Calu3 (cell line): ENCODE measurements at regions of chr14 and their contacts with region 1.

Region 1: DNA sequence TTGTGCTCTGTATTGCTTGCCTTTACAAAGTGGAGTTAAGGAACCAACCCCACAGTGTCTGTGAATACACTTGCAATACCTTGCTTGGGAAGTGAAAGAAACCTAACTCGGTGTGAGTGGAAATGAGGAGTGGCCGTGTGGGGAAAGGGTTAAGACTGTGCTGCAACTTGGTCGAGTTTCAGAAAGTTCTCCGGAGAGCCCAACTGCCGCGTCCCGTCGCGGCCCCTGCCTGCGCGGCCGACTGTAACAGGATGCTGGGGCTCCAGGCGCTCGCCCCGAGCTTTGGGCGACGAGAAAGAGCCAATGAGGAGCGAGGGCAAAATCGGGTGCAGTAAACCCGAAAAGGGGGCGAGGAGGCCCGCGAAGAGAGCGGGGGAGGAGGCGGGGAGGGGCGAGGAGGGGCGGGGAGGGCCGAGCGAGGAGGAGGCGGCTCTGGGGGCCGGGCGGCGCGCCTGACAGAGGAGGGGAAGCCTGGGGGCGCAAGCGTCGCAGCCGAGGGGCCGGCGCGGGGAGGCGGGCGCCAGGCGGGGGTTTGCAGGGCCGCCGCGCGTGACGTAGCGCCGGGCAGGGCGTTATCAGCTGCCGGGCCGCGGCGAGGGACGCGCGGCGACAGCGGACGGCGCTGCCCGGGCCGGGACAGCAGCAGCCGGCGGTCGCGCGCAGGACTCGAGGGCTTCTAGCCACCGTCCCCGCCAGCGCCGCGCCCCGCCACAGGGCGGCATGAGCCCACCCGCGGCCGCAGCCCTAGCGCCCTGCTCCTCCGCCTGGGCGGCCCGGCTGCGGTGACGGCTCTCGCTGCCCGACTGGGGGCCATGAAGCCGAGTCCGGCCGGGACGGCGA is at the start of gene DACT1:
- DNase-seq: peak; percentile 30
- H3K4me3 Mint-ChIP-seq: peak within 1 kb of the TSS; percentile 75
- H3K27ac Mint-ChIP-seq: no peak within 1 kb of the TSS
- H3K4me1 Mint-ChIP-seq: no peaks in the 10 kb centered on the region
- H3K27me3 Mint-ChIP-seq: peaks cover 65% of the 10 kb centered on the region
- CTCF ChIP-seq: no peak
- total RNA-seq, gene DACT1: not detected in 2 replicates

Region 2: DNA sequence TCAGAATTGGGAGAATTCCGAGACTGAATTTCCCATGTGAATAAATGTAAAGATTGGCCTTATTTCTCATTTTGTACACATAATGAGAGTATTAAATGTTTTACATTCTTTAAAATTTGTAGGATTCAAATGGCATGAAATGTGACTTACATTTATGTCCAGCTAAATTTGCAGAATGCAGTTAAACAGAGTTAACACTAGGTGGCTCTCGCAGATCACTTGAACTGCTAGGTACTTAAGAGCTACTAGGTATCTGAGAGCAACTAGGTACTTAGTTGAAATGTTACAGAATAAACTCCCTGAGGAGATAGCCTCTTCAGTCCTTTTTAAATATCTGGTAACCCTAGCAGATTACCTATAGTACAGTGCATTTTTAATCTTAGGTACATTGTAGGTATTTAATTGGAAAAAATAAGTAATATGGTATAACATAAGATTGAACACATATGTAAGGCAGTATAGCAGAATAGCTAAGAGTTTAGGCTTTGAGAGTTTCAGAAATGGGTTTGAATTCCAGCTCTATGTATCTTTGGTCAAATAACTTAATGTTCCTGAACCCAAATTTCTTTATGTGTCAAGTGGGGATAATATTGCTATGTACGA is 136.3 kb before region 1 on chr14:
- CTCF ChIA-PET with region 1: interaction called, 4 read pairs
- intact Hi-C with region 1: loop called (anchors 5 kb)
- DNase-seq: peak; percentile 16
- H3K4me3 Mint-ChIP-seq: no peak overlapping the region
- H3K27ac Mint-ChIP-seq: no peak overlapping the region
- H3K4me1 Mint-ChIP-seq: no peaks in the 10 kb centered on the region
- H3K27me3 Mint-ChIP-seq: no peaks in the 10 kb centered on the region
- CTCF ChIP-seq: peak; percentile 62

Region 3: DNA sequence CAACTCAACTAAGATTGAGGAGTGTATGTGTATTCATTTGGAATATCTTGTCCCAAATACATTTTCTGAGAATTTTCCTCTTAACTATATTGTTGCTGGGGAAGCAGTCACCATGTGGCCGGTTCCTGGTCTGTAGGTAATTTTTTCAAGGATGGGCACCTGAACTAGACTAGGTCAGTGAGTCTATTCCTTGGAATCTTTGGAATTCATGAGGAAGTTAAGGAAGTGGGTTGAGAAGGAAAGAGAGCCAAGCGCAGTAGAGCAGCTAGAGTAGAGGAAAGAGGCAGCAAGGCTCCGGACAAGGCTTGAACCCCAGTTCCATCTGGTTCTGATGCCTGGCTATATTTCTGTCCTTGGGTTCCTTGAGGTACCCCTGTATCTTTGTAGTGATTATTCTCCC is 183.8 kb after region 1 on chr14:
- CTCF ChIA-PET with region 1: interaction called, 6 read pairs
- intact Hi-C with region 1: loop called (anchors 2 kb)
- DNase-seq: no peak
- H3K4me3 Mint-ChIP-seq: no peak overlapping the region
- H3K27ac Mint-ChIP-seq: no peak overlapping the region
- H3K4me1 Mint-ChIP-seq: no peaks in the 10 kb centered on the region
- H3K27me3 Mint-ChIP-seq: no peaks in the 10 kb centered on the region
- CTCF ChIP-seq: no peak

Region 4: DNA sequence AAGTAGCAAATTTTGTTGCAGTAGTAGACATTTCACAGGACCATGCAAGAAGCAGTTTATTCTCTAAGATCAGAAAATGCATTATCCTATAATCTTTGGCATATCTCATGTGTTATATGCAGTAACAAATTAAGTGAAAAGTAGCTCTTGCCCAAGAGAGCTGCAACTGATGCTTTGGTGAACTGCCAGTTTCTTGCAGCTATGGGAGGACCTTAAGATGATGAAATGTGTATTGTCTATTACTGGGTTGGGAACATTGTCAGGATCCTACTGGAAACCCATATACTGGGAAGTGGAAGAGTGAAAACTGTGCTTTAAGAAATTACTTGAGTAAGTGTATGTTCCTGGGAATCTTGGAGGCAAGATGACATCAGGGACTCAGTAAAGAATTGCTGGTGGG is 239.0 kb after region 1 on chr14:
- CTCF ChIA-PET with region 1: no interaction called
- intact Hi-C with region 1: loop called (anchors 5 kb)
- DNase-seq: no peak
- H3K4me3 Mint-ChIP-seq: no peak overlapping the region
- H3K27ac Mint-ChIP-seq: no peak overlapping the region
- H3K4me1 Mint-ChIP-seq: peaks cover 9% of the 10 kb centered on the region
- H3K27me3 Mint-ChIP-seq: no peaks in the 10 kb centered on the region
- CTCF ChIP-seq: no peak

Region 5: GRCh38 chr14:59055439-59056045 is 417.9 kb after region 1 on chr14:
- CTCF ChIA-PET with region 1: interaction called, 3 read pairs
- intact Hi-C with region 1: loop called (anchors 1 kb)
- DNase-seq: peak; percentile 20
- H3K4me3 Mint-ChIP-seq: no peak overlapping the region
- H3K27ac Mint-ChIP-seq: no peak overlapping the region
- H3K4me1 Mint-ChIP-seq: no peaks in the 10 kb centered on the region
- H3K27me3 Mint-ChIP-seq: peaks cover 34% of the 10 kb centered on the region
- CTCF ChIP-seq: no peak